Caco-2 (cell line): ENCODE measurements at regions of chr4 and their contacts with region 1.

Region 1: GRCh38 chr4:20422398-20422797 is 170.7 kb downstream of the SLIT2 start:
- DNase-seq: peak; percentile 55 to 69
- H3K4me3 ChIP-seq: no peak overlapping the region
- H3K4me3 Mint-ChIP-seq: no peak overlapping the region
- H3K27ac Mint-ChIP-seq: no peak overlapping the region
- H3K4me1 ChIP-seq: no peaks in the 10 kb centered on the region
- H3K4me1 Mint-ChIP-seq: no peaks in the 10 kb centered on the region
- H3K27me3 ChIP-seq: no peaks in the 10 kb centered on the region
- H3K27me3 Mint-ChIP-seq: peaks cover 12% of the 10 kb centered on the region
- CTCF ChIP-seq: peak; percentile 62 to 65

Region 2: GRCh38 chr4:20544645-20545044 is 122.2 kb after region 1 on chr4:
- CTCF ChIA-PET with region 1: no interaction called
- POLR2A ChIA-PET with region 1: no interaction called
- intact Hi-C with region 1: loop called (anchors 1 kb)
- DNase-seq: no peak
- H3K4me3 ChIP-seq: no peak overlapping the region
- H3K4me3 Mint-ChIP-seq: no peak overlapping the region
- H3K27ac Mint-ChIP-seq: no peak overlapping the region
- H3K4me1 ChIP-seq: no peaks in the 10 kb centered on the region
- H3K4me1 Mint-ChIP-seq: no peaks in the 10 kb centered on the region
- H3K27me3 ChIP-seq: no peaks in the 10 kb centered on the region
- H3K27me3 Mint-ChIP-seq: peaks cover 3% of the 10 kb centered on the region
- CTCF ChIP-seq: peak; percentile 46

Region 3: GRCh38 chr4:20760053-20760452 is 337.7 kb after region 1 on chr4:
- CTCF ChIA-PET with region 1: no interaction called
- POLR2A ChIA-PET with region 1: no interaction called
- intact Hi-C with region 1: loop called (anchors 1 kb)
- DNase-seq: peak; percentile 29 to 39
- H3K4me3 ChIP-seq: no peak overlapping the region
- H3K4me3 Mint-ChIP-seq: no peak overlapping the region
- H3K27ac Mint-ChIP-seq: no peak overlapping the region
- H3K4me1 ChIP-seq: no peaks in the 10 kb centered on the region
- H3K4me1 Mint-ChIP-seq: no peaks in the 10 kb centered on the region
- H3K27me3 ChIP-seq: no peaks in the 10 kb centered on the region
- H3K27me3 Mint-ChIP-seq: no peaks in the 10 kb centered on the region
- CTCF ChIP-seq: peak; percentile 23 to 36